Activated CD4-positive, alpha-beta memory T cell treated with anti-CD3 and anti-CD28 coated beads for 36 hours (primary cell): ENCODE measurements at regions of chr1 and their contacts with region 1.

Region 1: GRCh38 chr1:248404024-248404423 is 1.2 kb downstream of the OR2T1 start:
- DNase-seq: no peak
- H3K4me3 Mint-ChIP-seq: no peak overlapping the region
- H3K27ac Mint-ChIP-seq: no peak overlapping the region
- H3K4me1 Mint-ChIP-seq: no peaks in the 10 kb centered on the region
- H3K27me3 Mint-ChIP-seq: no peaks in the 10 kb centered on the region

Region 2: GRCh38 chr1:247936415-247936814 is 467.6 kb before region 1 on chr1:
- CTCF ChIA-PET with region 1: no interaction called
- POLR2A ChIA-PET with region 1: no interaction called
- intact Hi-C with region 1: no loop called
- DNase-seq: no peak
- H3K4me3 Mint-ChIP-seq: no peak overlapping the region
- H3K27ac Mint-ChIP-seq: no peak overlapping the region
- H3K4me1 Mint-ChIP-seq: no peaks in the 10 kb centered on the region
- H3K27me3 Mint-ChIP-seq: no peaks in the 10 kb centered on the region

Region 3: DNA sequence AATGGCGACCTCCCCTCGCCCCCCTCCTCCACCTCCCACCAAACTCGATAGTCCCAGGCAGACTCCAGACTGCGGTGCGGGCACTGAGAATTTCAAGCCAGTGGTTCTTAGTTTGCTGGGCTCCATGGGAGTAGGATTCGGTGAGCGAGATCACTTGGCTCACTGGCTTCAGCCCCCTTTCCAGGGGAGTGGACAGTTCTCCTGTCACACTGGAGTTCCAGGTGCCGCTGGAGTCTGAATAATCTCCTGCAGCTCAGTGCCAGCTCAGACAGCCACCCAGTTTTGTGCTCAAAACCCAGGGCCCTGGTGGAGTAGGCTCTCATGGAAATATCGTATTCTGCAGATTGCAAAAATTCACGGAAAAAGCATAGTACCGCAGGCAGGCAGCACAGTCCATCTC is 87.2 kb before region 1 on chr1:
- CTCF ChIA-PET with region 1: no interaction called
- POLR2A ChIA-PET with region 1: no interaction called
- intact Hi-C with region 1: no loop called
- DNase-seq: no peak
- H3K4me3 Mint-ChIP-seq: no peak overlapping the region
- H3K27ac Mint-ChIP-seq: no peak overlapping the region
- H3K4me1 Mint-ChIP-seq: no peaks in the 10 kb centered on the region
- H3K27me3 Mint-ChIP-seq: peaks cover 17% of the 10 kb centered on the region

Region 4: GRCh38 chr1:248585266-248585665 is 181.2 kb after region 1 on chr1:
- CTCF ChIA-PET with region 1: no interaction called
- POLR2A ChIA-PET with region 1: no interaction called
- intact Hi-C with region 1: loop called (anchors 10 kb)
- DNase-seq: no peak
- H3K4me3 Mint-ChIP-seq: no peak overlapping the region
- H3K27ac Mint-ChIP-seq: no peak overlapping the region
- H3K4me1 Mint-ChIP-seq: peaks cover 7% of the 10 kb centered on the region
- H3K27me3 Mint-ChIP-seq: no peaks in the 10 kb centered on the region

Region 5: GRCh38 chr1:248611883-248612414 is 207.9 kb after region 1 on chr1:
- CTCF ChIA-PET with region 1: interaction called, 3 read pairs
- POLR2A ChIA-PET with region 1: no interaction called
- intact Hi-C with region 1: loop called (anchors 1 kb)
- DNase-seq: peak; percentile 30
- H3K4me3 Mint-ChIP-seq: no peak overlapping the region
- H3K27ac Mint-ChIP-seq: no peak overlapping the region
- H3K4me1 Mint-ChIP-seq: peaks cover 11% of the 10 kb centered on the region
- H3K27me3 Mint-ChIP-seq: peaks cover 2% of the 10 kb centered on the region